Activated T-helper 1 cell treated with anti-CD3 and anti-CD28 coated beads, Interleukin-12 subunit alpha, Interleukin-12 subunit beta, Interleukin-2, Interleukin-4 antibody, amounts not matched to agents 30 ng/mL and 10 ng/mL and 1 ng/mL, durations not matched to agents 14 hours and 24 hours and 36 hours (primary cell): ENCODE measurements at regions of chr13 and their contacts with region 1.

Region 1: GRCh38 chr13:99322297-99323103 is 15.3 kb upstream of the GPR183 start:
- DNase-seq: no peak
- H3K4me3 Mint-ChIP-seq: peak overlapping the region; percentile 38
- H3K27ac Mint-ChIP-seq: peak overlapping the region; percentile 96
- H3K4me1 Mint-ChIP-seq: peaks cover 68% of the 10 kb centered on the region
- H3K27me3 Mint-ChIP-seq: no peaks in the 10 kb centered on the region

Region 2: DNA sequence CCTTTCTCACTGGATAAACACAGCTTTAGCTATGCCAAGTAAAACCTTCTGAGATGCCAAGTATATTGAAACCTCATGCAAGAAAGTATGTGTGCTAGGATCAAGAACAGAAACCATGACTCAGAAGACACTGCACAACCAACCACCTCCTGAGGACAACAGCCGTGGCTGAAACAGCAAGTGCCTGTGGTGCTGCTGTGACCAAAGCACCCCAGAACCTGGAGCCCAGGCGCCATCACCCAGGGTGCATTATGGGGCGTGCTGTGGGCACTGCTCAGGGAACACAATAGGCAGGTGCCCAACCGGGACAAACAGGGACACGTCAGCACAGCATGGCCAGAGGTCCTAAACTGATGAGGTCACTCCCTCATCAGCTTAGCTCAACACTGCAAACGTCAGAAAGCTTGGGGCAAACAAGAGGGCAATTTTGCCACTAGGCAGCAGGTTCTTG is 468.7 kb before region 1 on chr13:
- intact Hi-C with region 1: no loop called
- DNase-seq: peak; percentile 59
- H3K4me3 Mint-ChIP-seq: peak overlapping the region; percentile 36
- H3K27ac Mint-ChIP-seq: peak overlapping the region; percentile 13
- H3K4me1 Mint-ChIP-seq: peaks cover 21% of the 10 kb centered on the region
- H3K27me3 Mint-ChIP-seq: no peaks in the 10 kb centered on the region

Region 3: DNA sequence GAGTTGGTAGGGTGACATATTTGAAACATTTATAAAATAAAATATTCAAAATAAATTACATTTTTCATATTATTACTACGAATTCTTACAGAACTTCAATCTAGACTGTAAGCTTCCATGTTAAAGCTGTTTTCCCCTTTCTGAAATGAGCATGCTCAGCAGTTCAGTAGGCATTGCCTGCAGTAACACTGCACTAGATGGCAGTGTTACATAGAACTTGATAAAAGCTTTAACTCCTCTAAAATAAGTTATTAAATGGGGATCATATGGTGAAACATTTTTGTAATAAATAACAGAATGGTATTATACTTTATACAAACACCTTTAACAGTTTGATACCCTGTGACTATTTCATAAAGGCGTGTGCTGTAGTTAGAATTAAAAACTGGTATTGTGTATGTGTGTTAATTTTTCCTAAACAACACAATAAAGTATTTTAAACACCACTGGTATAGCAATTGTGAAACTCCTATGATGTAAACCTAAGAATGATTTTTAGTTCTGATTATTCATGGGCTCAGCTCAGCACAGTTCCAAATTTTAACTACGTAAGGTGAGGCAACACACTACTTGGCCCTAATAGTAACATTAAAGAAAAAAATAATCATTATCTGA is 52.8 kb before region 1 on chr13:
- intact Hi-C with region 1: loop called (anchors 1 kb)
- DNase-seq: no peak
- H3K4me3 Mint-ChIP-seq: no peak overlapping the region
- H3K27ac Mint-ChIP-seq: no peak overlapping the region
- H3K4me1 Mint-ChIP-seq: peaks cover 55% of the 10 kb centered on the region
- H3K27me3 Mint-ChIP-seq: no peaks in the 10 kb centered on the region

Region 4: DNA sequence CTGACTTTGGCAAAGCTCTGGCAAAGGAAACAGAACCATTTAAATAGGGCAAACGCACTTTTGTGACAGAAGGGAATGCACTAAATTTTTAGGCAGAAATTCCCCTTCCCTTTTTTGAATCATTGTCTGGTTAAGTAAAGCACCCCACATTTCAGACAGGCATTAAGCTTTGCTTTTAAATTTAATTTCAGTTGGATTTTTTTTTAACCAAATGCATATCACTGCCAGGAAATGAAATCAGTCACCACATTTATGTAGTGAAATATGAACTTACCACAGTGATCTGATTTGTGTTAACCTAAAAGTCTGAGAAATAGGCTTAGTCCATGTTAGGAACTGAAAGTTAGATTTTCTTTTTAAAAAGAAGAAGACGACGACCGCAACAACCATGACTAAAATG is 26.1 kb before region 1 on chr13:
- intact Hi-C with region 1: loop called (anchors 1 kb)
- DNase-seq: no peak
- H3K4me3 Mint-ChIP-seq: peak overlapping the region; percentile 77
- H3K27ac Mint-ChIP-seq: peak overlapping the region; percentile 95
- H3K4me1 Mint-ChIP-seq: peaks cover 73% of the 10 kb centered on the region
- H3K27me3 Mint-ChIP-seq: no peaks in the 10 kb centered on the region

Region 5: GRCh38 chr13:99356158-99357091 is 33.9 kb after region 1 on chr13:
- intact Hi-C with region 1: loop called (anchors 1 kb)
- DNase-seq: peak; percentile 74
- H3K4me3 Mint-ChIP-seq: peak overlapping the region; percentile 62
- H3K27ac Mint-ChIP-seq: peak overlapping the region; percentile 95
- H3K4me1 Mint-ChIP-seq: peaks cover 99% of the 10 kb centered on the region
- H3K27me3 Mint-ChIP-seq: peaks cover 3% of the 10 kb centered on the region

Region 6: DNA sequence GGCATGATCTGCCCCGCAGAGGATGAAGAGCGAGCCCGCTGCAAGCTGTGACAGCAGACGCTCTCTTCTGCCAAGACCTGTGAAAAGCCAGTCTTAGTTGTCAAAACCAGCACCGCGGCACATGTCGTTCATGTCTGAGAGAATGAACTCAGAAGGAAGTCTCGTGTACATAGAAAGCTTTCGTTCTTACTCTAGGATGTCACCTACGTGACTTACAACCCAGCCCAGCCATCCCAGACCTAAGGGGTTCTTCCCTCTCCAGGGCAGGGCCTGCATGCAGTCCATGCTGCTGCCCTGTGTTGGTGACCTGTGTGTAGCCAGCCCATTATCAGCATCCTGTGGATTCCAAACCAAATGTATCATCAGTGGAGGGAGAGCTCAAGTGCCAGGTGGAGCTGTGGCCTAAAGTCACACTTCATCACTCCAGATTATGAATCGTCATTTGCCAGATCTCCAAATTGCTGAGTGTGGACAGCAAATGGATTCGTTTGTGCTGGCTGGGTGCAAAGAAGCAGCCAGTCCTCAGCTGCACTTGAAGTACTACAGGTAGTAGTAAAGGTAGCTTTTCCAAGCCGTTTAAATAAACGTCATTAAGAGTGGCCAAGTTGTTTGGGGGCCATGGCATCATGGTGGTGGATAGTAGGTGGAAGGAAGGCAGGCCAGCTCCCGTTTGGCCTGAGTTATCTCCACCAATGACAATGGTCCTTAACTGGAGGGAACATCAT is 58.6 kb after region 1 on chr13:
- intact Hi-C with region 1: loop called (anchors 1 kb)
- DNase-seq: peak; percentile 59
- H3K4me3 Mint-ChIP-seq: peak overlapping the region; percentile 65
- H3K27ac Mint-ChIP-seq: peak overlapping the region; percentile 85
- H3K4me1 Mint-ChIP-seq: peaks cover 60% of the 10 kb centered on the region
- H3K27me3 Mint-ChIP-seq: peaks cover 2% of the 10 kb centered on the region